ENCODE measurements at regions of chr13 and their contacts with region 1.

Region 1: DNA sequence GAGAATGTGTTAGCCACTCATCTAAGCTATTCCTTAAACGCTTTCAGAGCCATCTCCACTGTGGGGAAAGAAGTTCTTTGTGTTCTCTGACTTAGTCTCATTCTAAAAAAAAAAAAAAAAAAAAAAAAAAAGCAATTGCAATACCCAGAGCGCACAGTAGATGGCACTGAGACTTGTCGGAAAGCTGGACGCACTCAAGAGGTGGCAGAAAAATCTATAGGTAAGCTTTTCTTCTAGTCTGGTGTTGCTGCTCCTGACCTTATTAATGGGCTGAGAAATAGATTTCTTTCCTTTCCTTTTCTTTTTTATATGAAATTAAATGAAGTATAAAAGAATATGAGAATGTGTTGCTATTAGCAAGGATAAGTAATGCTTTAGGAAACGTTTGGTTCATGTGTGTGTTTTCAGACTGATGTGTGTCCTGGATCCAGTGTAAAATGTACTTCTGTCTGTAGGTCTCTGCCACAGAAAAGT is 4.7 kb upstream of the GJB2 start:
- DNase-seq: peak in 1 of 2 experiments; percentile 65
- H3K4me3 ChIP-seq: no peak overlapping the region
- H3K27ac ChIP-seq: no peak overlapping the region
- H3K4me1 ChIP-seq: no peaks in the 10 kb centered on the region
- H3K27me3 ChIP-seq: no peaks in the 10 kb centered on the region
- CTCF ChIP-seq: peak; percentile 85

Region 2: GRCh38 chr13:20482275-20482761 is 284.9 kb after region 1 on chr13:
- CTCF ChIA-PET with region 1: interaction called, 26 read pairs
- POLR2A ChIA-PET with region 1: no interaction called
- intact Hi-C with region 1: no loop called
- DNase-seq: peak; percentile 29 to 79
- H3K4me3 ChIP-seq: no peak overlapping the region
- H3K27ac ChIP-seq: peak overlapping the region; percentile 62
- H3K4me1 ChIP-seq: peaks cover 17% of the 10 kb centered on the region
- H3K27me3 ChIP-seq: no peaks in the 10 kb centered on the region
- CTCF ChIP-seq: no peak

Region 3: GRCh38 chr13:20489185-20489820 is 291.9 kb after region 1 on chr13:
- CTCF ChIA-PET with region 1: interaction called, 5 read pairs
- POLR2A ChIA-PET with region 1: interaction called, 5 read pairs
- intact Hi-C with region 1: loop called (anchors 1 kb)
- DNase-seq: peak; percentile 53 to 61
- H3K4me3 ChIP-seq: no peak overlapping the region
- H3K27ac ChIP-seq: no peak overlapping the region
- H3K4me1 ChIP-seq: no peaks in the 10 kb centered on the region
- H3K27me3 ChIP-seq: no peaks in the 10 kb centered on the region
- CTCF ChIP-seq: peak; percentile 90

Region 4: GRCh38 chr13:20566898-20567874 is 369.8 kb after region 1 on chr13 and contains the start of gene IFT88:
- CTCF ChIA-PET with region 1: interaction called, 10 read pairs
- POLR2A ChIA-PET with region 1: no interaction called
- intact Hi-C with region 1: no loop called
- DNase-seq: peak; percentile 84 to 85
- H3K4me3 ChIP-seq: peak within 1 kb of the TSS; percentile 66
- H3K27ac ChIP-seq: peak within 1 kb of the TSS; percentile 83
- H3K4me1 ChIP-seq: peaks cover 12% of the 10 kb centered on the region
- H3K27me3 ChIP-seq: no peaks in the 10 kb centered on the region
- CTCF ChIP-seq: no peak
- total RNA-seq, gene IFT88: 11.0 and 11.7 TPM in 2 replicates

Region 5: DNA sequence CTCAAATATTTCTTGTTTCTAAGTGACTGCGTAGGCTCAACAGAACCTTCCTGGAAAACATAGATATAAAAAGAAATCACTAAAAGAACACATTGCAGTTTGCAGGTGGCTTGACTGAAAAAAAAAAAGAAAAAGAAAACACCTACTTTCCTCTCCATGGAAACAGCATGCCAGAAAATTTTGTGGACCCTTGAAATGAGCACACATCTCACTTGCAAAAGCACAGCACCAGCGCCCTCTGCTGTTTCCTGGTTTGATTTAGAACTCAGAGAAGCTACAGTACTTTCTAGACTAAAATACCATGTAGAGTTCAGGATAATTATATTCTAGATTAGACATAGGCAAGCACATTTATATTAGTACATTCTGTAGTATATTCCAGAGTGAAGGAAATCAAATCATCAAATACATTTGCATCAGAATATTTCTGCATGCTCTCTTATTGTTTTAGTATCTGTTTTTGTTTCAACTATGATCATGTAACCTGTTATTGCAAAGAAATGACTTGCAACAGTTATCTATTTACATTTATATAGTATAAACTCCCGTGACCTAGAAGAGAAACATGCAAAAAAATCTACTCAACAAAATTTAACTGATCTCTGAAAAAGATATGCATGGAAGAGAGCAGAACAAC is 727.5 kb after region 1 on chr13:
- CTCF ChIA-PET with region 1: no interaction called
- POLR2A ChIA-PET with region 1: no interaction called
- intact Hi-C with region 1: loop called (anchors 10 kb)
- DNase-seq: peak; percentile 48 to 54
- H3K4me3 ChIP-seq: no peak overlapping the region
- H3K27ac ChIP-seq: no peak overlapping the region
- H3K4me1 ChIP-seq: no peaks in the 10 kb centered on the region
- H3K27me3 ChIP-seq: no peaks in the 10 kb centered on the region
- CTCF ChIP-seq: peak; percentile 83